ENCODE measurements at regions of chr19 and their contacts with region 1.

Region 1: GRCh38 chr19:15264061-15264932 is 32.0 kb upstream of the EPHX3 start:
- DNase-seq: peak; percentile 42
- H3K4me3 Mint-ChIP-seq: no peak overlapping the region
- H3K27ac Mint-ChIP-seq: no peak overlapping the region
- H3K4me1 Mint-ChIP-seq: peaks cover 14% of the 10 kb centered on the region
- H3K27me3 Mint-ChIP-seq: no peaks in the 10 kb centered on the region

Region 2: GRCh38 chr19:15177269-15178116 is 86.8 kb before region 1 on chr19:
- intact Hi-C with region 1: no loop called
- DNase-seq: peak; percentile 74
- H3K4me3 Mint-ChIP-seq: peak overlapping the region; percentile 13
- H3K27ac Mint-ChIP-seq: no peak overlapping the region
- H3K4me1 Mint-ChIP-seq: peaks cover 6% of the 10 kb centered on the region
- H3K27me3 Mint-ChIP-seq: peaks cover 6% of the 10 kb centered on the region

Region 3: DNA sequence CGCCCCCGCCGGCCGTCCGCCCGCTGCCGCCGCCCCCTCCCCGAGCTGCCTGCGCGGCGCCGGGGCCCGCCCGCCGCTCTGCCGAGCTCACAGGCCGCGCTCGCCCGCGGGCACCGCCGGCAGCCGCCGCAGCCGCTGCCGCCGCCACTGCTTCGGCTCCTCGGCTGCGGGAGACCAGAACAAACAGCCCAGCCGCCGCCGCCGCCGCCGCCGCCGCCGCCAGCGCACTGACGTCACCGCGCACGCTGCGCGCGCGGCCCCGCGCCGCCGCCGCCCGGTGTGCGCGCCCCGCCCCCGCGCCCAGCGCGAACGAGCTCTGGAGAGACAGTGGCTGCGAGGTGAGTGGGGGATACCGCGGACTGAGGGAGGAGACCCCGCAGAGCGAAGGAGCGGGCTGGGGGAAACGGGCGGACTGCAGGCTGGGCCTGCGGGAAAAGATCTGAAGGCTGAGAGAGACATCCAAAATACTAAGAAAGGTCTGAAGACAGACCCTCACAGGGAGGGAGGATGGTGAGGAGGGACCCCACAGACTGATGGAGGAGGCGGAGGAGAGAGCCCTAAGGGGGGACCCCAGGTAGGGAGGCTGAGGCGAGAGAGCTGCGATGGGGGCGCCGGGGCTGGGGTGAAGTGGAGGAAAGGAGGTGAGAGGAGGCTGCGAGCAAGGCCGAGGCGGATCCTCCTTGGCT is 68.2 kb after region 1 on chr19 and contains the start of gene BRD4:
- intact Hi-C with region 1: loop called (anchors 1 kb)
- DNase-seq: peak; percentile 78
- H3K4me3 Mint-ChIP-seq: peak within 1 kb of the TSS; percentile 98
- H3K27ac Mint-ChIP-seq: peak within 1 kb of the TSS; percentile 98
- H3K4me1 Mint-ChIP-seq: peaks cover 35% of the 10 kb centered on the region
- H3K27me3 Mint-ChIP-seq: no peaks in the 10 kb centered on the region
- total RNA-seq, gene BRD4: 122 and 129 TPM in 2 replicates